OCI-LY7 (cell line): ENCODE measurements at regions of chr3 and their contacts with region 1.

Region 1: GRCh38 chr3:23859016-23859743 is 53.4 kb downstream of the UBE2E1 start:
- DNase-seq: no peak
- H3K4me3 ChIP-seq: no peak overlapping the region
- H3K27ac ChIP-seq: no peak overlapping the region
- H3K4me1 ChIP-seq: peaks cover 29% of the 10 kb centered on the region
- CTCF ChIP-seq: no peak

Region 2: GRCh38 chr3:23836536-23837230 is 22.5 kb before region 1 on chr3:
- CTCF ChIA-PET with region 1: no interaction called
- POLR2A ChIA-PET with region 1: interaction called, 17 read pairs
- intact Hi-C with region 1: no loop called
- DNase-seq: no peak
- H3K4me3 ChIP-seq: no peak overlapping the region
- H3K27ac ChIP-seq: no peak overlapping the region
- H3K4me1 ChIP-seq: peaks cover 22% of the 10 kb centered on the region
- CTCF ChIP-seq: no peak

Region 3: DNA sequence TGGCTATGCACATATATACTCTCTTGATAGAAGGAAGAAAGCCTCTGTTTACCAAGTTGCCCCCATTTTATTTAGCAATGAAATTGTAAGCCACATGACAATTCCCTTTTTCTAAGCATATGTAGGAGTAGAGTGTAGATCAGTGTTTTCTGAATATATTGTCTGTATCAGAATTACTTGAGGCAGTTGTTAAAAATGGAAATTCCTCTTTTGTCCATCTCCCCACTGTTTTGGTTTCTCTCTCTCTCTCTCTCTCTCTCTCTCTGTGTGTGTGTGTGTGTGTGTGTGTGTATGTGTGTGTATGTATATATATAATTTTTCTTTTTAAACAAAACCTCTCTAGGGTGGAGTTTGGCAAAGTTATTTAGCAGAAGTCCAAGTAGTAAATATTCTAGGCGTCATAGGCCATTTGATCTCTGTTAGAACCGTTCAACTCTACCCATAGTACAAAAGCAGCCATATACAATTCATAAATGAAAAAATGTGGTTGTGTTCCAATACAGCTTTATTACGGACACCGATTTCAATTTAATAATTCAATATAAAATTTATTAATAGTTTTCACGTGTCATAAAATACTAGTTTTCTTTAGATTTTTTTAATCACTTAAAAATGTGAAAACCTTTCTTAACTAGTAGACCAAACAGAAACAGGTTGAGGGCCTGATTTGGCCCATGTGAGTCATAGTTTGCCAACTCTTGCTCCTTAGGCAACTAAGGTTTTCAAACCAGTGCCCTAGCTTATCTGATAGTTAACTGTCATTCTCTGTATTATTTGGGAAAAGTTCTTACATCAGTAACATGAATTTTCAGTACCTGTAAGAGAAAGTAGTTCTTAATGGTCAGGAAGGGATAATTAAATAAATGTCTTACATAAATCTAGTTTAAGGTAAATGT is 13.6 kb before region 1 on chr3:
- CTCF ChIA-PET with region 1: no interaction called
- POLR2A ChIA-PET with region 1: interaction called, 27 read pairs
- intact Hi-C with region 1: no loop called
- DNase-seq: no peak
- H3K4me3 ChIP-seq: no peak overlapping the region
- H3K27ac ChIP-seq: no peak overlapping the region
- H3K4me1 ChIP-seq: peaks cover 6% of the 10 kb centered on the region
- CTCF ChIP-seq: no peak

Region 4: GRCh38 chr3:24496529-24497482 is 637.6 kb after region 1 on chr3:
- CTCF ChIA-PET with region 1: no interaction called
- POLR2A ChIA-PET with region 1: no interaction called
- intact Hi-C with region 1: no loop called
- DNase-seq: no peak
- H3K4me3 ChIP-seq: no peak overlapping the region
- H3K27ac ChIP-seq: no peak overlapping the region
- H3K4me1 ChIP-seq: no peaks in the 10 kb centered on the region
- CTCF ChIP-seq: peak; percentile 44; the same call in 1 of the 2 replicates